Ovary (tissue), 10 donors: ENCODE measurements at regions of chr22 and their contacts with region 1.

Region 1: DNA sequence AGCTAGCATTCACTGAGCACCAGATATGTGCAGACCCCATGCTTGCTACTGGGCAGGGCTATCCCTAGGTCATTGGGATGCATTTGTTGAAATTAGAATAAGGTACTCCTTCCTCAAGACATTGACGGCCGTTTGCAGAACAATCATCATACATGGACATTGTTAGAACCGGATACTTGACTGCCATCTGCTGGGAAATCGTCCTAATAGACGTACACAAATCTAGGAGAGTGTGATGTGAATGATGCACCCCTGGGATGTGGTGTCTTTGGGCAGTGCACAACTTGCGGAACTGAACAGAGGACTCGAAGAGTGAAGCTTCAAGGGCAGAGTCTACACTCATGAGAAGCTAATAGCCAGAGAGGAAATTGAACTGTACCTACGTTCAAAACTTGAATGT is 35.9 kb downstream of the MYO18B start:
- DNase-seq: no peak
- H3K4me3 ChIP-seq: no peak overlapping the region
- H3K27ac ChIP-seq: no peak overlapping the region
- H3K4me1 ChIP-seq: no peaks in the 10 kb centered on the region
- H3K27me3 ChIP-seq: no peaks in the 10 kb centered on the region
- CTCF ChIP-seq: no peak
- EP300 ChIP-seq: no peak
- POLR2A ChIP-seq: no peak

Region 2: GRCh38 chr22:25362215-25362882 is 415.5 kb before region 1 on chr22:
- intact Hi-C with region 1: loop called in 1 of 4 experiments (anchors 10 kb)
- DNase-seq: peak; percentile 49 to 75 (median 70)
- H3K4me3 ChIP-seq: no peak overlapping the region
- H3K27ac ChIP-seq: no peak overlapping the region
- H3K4me1 ChIP-seq: peaks cover 17% of the 10 kb centered on the region
- H3K27me3 ChIP-seq: no peaks in the 10 kb centered on the region
- CTCF ChIP-seq: peak; percentile 57 to 79 (median 68)
- EP300 ChIP-seq: no peak
- POLR2A ChIP-seq: no peak

Region 3: GRCh38 chr22:25465949-25466348 is 311.9 kb before region 1 on chr22:
- intact Hi-C with region 1: loop called in 3 of 4 experiments (anchors 5 to 10 kb)
- DNase-seq: no peak
- H3K4me3 ChIP-seq: no peak overlapping the region
- H3K27ac ChIP-seq: no peak overlapping the region
- H3K4me1 ChIP-seq: no peaks in the 10 kb centered on the region
- H3K27me3 ChIP-seq: no peaks in the 10 kb centered on the region
- CTCF ChIP-seq: no peak
- EP300 ChIP-seq: no peak
- POLR2A ChIP-seq: no peak

Region 4: DNA sequence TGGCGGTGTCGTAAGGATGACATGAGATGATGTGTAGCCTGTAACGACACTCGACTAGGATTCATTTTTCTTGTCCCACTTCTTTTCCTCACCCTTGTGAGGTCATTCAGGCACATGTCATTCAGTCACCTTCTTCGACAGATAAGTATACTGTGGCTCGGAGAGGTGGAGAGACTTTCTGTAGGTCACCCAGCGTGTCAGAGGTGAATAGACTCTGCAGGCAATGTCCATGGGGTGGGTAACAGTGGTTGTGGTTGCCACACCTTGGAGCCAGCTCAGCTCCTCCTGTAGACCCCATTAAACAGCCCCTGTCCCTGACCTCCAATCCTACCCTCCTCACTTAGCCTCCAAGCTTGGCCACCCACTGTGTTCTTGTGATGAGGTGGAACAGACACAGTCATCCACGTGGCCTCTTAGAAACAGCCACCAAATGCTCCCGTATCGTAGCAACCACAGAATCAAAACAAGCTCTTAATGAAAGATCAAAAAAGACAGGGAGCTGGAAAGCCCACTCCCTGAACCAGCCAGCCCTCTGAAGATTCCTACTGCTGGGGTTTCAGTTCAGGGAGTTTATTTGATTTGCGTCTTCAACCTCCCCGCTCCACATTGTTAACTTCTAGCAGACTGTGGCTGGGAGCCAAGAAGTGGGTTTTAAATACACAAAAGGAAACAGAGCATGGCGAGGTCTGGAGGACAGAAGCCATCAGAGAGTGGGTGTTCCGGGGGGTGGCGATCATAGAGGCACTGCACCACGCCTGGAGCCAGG is 302.4 kb before region 1 on chr22:
- intact Hi-C with region 1: loop called in 1 of 4 experiments (anchors 10 kb)
- DNase-seq: no peak
- H3K4me3 ChIP-seq: no peak overlapping the region
- H3K27ac ChIP-seq: no peak overlapping the region
- H3K4me1 ChIP-seq: no peaks in the 10 kb centered on the region
- H3K27me3 ChIP-seq: no peaks in the 10 kb centered on the region
- CTCF ChIP-seq: no peak
- EP300 ChIP-seq: no peak
- POLR2A ChIP-seq: no peak

Region 5: DNA sequence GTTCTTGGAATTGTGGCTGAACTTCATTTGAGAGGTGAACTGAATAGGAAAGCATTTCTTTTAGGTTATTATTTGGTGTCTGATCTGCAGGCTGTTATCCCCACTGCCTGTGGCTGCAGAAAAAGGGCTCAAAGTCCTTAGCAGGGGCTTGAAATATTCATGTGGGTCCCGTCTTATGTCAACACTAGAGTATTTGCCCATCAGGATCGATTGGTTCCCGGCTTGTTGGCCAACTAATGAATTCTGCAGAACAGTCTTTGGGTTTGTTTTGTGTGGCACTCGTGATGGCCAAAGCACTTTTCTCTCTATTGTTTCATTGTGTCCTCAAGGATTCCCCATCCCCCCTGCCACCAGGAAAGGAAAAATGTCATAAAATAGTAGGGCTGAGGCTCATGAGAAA is 176.0 kb after region 1 on chr22:
- intact Hi-C with region 1: no loop called
- DNase-seq: no peak
- H3K4me3 ChIP-seq: no peak overlapping the region
- H3K27ac ChIP-seq: no peak overlapping the region
- H3K4me1 ChIP-seq: no peaks in the 10 kb centered on the region
- H3K27me3 ChIP-seq: no peaks in the 10 kb centered on the region
- CTCF ChIP-seq: no peak
- EP300 ChIP-seq: no peak
- POLR2A ChIP-seq: no peak